HEK293T (cell line): ENCODE measurements at regions of chr4 and their contacts with region 1.

Region 1: DNA sequence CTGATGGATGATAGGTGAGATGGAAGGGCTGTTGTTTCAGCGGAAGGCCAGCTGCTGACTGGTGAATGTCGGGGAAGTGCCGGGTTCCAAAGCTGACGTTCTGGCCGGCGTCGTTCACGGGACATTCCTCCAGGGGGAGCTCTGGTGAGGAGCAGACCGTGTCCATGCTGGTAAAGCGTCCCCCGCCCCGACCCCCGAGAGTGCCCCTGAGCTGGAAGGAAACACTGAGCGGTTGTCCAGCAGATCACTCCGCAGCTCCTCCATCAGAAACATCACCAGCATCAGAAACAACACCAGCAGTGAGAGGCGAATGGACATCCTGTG is 18.6 kb upstream of the ADRA2C start:
- DNase-seq: peak; percentile 51

Region 2: DNA sequence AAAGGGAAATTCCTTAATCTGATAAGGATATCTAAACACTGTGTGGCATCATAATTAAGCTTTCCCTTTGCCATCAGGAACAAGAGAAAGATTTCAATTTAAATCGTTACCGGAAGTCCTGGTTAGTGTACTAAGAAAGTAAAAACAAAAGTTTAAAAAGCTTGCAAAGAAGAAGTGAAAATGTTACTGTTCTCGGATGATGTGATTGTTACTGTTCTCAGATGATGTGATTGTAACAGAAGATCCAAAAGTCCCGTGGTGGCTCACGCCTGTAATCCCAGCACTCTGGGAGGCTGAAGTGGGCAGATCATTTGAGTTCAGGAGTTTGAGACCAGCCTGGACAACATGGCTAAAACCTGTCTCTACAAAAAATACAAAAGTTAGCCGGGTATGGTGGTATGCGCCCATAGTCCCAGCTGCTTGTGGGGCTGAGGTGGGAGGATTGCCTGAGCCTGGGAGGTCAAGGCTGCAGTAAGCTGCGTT is 392.2 kb before region 1 on chr4:
- CTCF ChIA-PET with region 1: no interaction called
- POLR2A ChIA-PET with region 1: no interaction called
- DNase-seq: no peak

Region 3: GRCh38 chr4:3660086-3660927 is 87.2 kb before region 1 on chr4:
- CTCF ChIA-PET with region 1: no interaction called
- POLR2A ChIA-PET with region 1: no interaction called
- DNase-seq: no peak

Region 4: DNA sequence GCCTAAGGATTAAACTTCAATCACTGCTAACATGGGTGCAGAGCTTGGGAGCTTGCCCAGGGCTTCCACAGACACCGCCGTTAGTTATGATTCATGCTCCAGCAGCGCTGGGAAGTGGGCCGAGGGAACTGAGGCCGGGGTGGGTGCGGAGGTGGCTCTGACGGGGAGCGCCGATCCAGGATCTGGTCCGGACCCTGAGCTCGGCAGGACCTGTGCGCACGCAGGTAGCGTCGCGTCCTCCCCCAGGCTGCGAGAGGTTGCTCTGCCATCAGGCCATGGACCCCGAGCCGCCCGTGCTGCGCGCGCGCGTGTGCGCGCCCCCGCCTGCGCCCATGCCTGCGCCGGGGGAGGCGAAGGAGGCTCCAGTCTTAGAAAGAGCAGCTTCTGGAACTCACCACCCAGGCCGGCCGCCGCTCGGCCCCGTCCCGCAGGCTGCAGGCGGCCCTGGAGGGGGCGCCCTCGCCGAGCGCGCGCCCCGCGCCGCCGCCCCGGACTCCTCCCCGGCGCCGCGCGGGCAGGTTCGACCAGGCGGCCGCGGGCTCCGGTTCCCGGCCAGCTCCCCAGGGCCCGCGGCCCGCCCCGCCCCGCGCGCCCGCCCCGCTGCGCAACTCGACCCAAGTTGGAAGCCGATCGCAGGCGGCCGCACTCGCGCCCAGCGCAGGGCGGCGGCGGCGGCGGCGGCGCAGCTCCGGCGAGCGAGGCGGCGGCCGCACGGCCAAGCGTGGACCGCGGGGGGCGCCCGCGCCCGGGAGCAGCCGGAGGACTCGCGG is 17.9 kb after region 1 on chr4:
- CTCF ChIA-PET with region 1: interaction called, 7 read pairs
- POLR2A ChIA-PET with region 1: interaction called, 10 read pairs
- DNase-seq: peak; percentile 78

Region 5: DNA sequence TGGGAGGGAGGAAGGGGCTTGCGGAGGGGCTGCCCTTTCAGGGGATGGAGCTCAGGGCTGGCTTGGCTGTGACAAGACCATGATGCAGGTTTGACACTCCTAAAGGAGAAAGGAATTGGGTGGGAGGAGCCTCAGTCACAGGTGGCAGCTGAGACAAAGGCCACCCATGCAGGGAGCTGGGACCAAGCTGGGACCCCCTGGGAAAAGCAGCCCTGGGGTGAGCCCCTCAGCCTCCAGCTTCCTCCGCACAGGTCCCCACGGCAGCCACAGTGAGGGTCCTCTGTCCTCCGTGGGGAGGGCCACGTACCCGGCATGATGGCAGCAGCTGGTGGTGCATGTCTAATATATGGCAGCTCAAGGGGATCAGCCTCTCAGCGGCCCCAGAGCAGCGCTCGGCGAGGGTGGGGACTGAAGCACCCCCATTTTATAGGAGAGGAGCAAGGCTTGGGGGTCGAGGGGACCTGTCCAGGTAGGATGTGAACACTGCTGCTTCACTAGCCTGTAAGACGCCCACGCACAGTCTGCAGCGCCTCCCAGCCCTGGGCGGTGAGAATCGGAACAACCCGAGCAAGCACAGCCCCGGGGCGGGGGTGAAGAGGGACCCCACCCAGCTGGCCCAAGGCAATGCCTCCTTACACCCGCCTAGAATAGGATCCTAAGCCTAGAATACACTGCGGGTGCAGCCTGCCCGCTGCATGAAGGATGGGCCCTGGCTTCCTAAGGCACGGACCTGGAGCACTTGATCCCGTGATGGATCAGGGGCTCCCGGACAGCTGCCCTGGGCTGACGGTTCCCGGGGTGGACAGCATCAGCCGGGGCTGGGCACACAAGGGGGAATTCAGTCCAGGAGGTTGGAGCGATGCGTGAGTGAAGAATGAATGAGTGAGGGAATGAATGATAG is 36.1 kb after region 1 on chr4:
- CTCF ChIA-PET with region 1: interaction called, 11 read pairs
- POLR2A ChIA-PET with region 1: interaction called, 3 read pairs
- DNase-seq: peak; percentile 66

Region 6: GRCh38 chr4:3880615-3881120 is 133.1 kb after region 1 on chr4:
- CTCF ChIA-PET with region 1: interaction called, 14 read pairs
- POLR2A ChIA-PET with region 1: interaction called, 3 read pairs
- DNase-seq: peak; percentile 82